Calu3 (cell line): ENCODE measurements at regions of chr11 and their contacts with region 1.

Region 1: DNA sequence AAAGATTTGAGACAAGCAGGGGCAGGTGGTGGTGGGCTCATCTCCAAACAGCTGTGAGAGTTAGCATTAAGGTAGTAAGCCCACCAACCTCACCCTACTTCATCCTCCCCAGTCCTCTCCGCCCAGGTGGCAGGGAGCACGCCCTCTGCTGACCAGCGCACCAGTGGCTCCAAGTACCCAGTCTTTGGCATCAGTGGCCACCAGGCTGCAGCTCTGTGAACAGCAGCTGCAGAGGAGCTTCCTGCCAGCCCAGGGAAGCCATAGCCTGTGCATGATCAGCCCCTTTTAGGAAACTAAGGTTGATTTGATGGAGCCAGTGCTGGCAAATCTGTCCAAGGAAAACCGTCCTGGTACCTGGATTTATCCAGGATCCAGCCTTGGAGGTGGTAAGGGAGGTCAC is 21.7 kb downstream of the CAVIN3 start:
- DNase-seq: peak; percentile 75
- H3K4me3 Mint-ChIP-seq: no peak overlapping the region
- H3K27ac Mint-ChIP-seq: no peak overlapping the region
- H3K4me1 Mint-ChIP-seq: no peaks in the 10 kb centered on the region
- H3K27me3 Mint-ChIP-seq: no peaks in the 10 kb centered on the region
- CTCF ChIP-seq: peak; percentile 85

Region 2: GRCh38 chr11:6022956-6023355 is 275.6 kb before region 1 on chr11:
- CTCF ChIA-PET with region 1: no interaction called
- intact Hi-C with region 1: loop called (anchors 5 kb)
- DNase-seq: peak; percentile 13
- H3K4me3 Mint-ChIP-seq: no peak overlapping the region
- H3K27ac Mint-ChIP-seq: no peak overlapping the region
- H3K4me1 Mint-ChIP-seq: no peaks in the 10 kb centered on the region
- H3K27me3 Mint-ChIP-seq: peaks cover 66% of the 10 kb centered on the region
- CTCF ChIP-seq: no peak

Region 3: GRCh38 chr11:6251120-6251733 is 47.4 kb before region 1 on chr11:
- CTCF ChIA-PET with region 1: interaction called, 14 read pairs
- intact Hi-C with region 1: loop called (anchors 5 kb)
- DNase-seq: peak; percentile 83
- H3K4me3 Mint-ChIP-seq: no peak overlapping the region
- H3K27ac Mint-ChIP-seq: no peak overlapping the region
- H3K4me1 Mint-ChIP-seq: no peaks in the 10 kb centered on the region
- H3K27me3 Mint-ChIP-seq: no peaks in the 10 kb centered on the region
- CTCF ChIP-seq: peak; percentile 76